CD4-positive, alpha-beta memory T cell (primary cell): ENCODE measurements at regions of chr10 and their contacts with region 1.

Region 1: GRCh38 chr10:62816331-62817120 is at the start of gene EGR2:
- DNase-seq: peak; percentile 97 to 99 (median 98)
- H3K4me3 ChIP-seq: peak within 1 kb of the TSS; percentile 62 to 66
- H3K4me3 Mint-ChIP-seq: peak within 1 kb of the TSS; percentile 90 to 100 (median 98)
- H3K27ac ChIP-seq: peak within 1 kb of the TSS; percentile 69
- H3K27ac Mint-ChIP-seq: peak within 1 kb of the TSS; percentile 91 to 99 (median 97)
- H3K4me1 ChIP-seq: peaks cover 40% of the 10 kb centered on the region
- H3K4me1 Mint-ChIP-seq: peaks cover 25 to 56% (median 38%) of the 10 kb centered on the region in 4 donors
- H3K27me3 ChIP-seq: peaks cover 25% of the 10 kb centered on the region
- H3K27me3 Mint-ChIP-seq: peaks cover 27 to 34% of the 10 kb centered on the region in 2 donors
- total RNA-seq, gene EGR2: 2.0 to 2.2 TPM

Region 2: DNA sequence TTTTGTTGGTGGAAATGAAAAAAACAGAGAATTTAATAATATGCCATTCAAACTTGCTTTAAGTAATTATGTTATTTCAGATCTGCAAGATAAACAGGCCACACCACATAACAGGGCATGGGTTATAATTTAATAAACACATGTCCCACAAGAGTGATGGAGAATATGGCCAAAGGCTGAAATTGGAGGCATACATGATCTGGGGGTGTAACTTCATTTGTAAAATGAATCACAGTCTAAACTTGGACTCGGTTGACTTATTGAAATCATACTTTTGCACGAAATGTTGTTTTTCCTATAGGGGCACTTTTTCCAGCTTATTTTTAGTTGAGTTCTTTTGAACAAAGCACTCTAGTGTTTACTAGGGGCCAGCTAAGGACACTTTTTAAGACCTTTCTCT is 1515.0 kb before region 1 on chr10:
- CTCF ChIA-PET with region 1: no interaction called
- POLR2A ChIA-PET with region 1: no interaction called
- intact Hi-C with region 1: no loop called
- DNase-seq: no peak
- H3K4me3 ChIP-seq: no peak overlapping the region
- H3K4me3 Mint-ChIP-seq: no peak overlapping the region
- H3K27ac ChIP-seq: no peak overlapping the region
- H3K27ac Mint-ChIP-seq: no peak overlapping the region
- H3K4me1 ChIP-seq: no peaks in the 10 kb centered on the region
- H3K4me1 Mint-ChIP-seq: no peaks in the 10 kb centered on the region
- H3K27me3 ChIP-seq: no peaks in the 10 kb centered on the region
- H3K27me3 Mint-ChIP-seq: peaks cover 0 to 1% of the 10 kb centered on the region in 2 donors

Region 3: DNA sequence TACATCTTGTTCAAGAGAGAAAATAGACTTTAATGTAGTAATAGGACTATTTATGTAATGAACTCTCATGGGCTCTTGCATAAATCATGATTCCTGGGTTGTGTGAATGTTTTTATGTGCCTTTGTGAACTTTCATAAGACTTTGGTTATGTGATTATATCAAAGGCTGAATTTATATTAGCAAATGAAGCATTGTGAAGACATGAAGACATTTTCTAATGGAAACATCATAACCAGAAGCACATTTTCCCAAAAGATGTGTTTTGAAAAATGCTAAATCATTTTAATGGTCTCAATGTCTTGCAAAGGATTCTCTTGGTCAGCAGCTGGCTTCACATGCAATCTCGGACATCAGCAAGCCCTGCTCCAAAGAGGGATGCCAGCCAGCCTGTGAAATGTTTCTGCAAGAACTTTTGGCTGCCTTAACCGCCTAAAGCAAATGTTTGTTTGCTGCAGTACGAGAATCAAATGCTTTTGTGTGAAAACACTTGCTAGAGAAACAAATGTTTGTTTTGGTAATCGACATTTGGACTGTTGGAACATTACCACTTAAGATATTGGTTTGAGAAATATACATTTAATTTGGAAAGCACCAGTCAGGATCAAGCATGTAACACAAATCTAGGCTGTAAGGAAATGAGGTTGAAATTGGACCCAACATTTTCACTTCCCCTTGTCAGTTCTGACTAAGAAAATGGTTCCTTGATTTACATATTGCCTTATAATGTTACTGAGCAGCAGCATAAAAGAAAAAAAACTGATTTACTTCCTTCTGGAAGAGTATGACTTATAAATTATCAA is 650.0 kb before region 1 on chr10:
- CTCF ChIA-PET with region 1: no interaction called
- POLR2A ChIA-PET with region 1: no interaction called
- intact Hi-C with region 1: no loop called
- DNase-seq: no peak
- H3K4me3 ChIP-seq: no peak overlapping the region
- H3K4me3 Mint-ChIP-seq: no peak overlapping the region
- H3K27ac ChIP-seq: no peak overlapping the region
- H3K27ac Mint-ChIP-seq: no peak overlapping the region
- H3K4me1 ChIP-seq: no peaks in the 10 kb centered on the region
- H3K4me1 Mint-ChIP-seq: peaks cover 0 to 2% (median 0%) of the 10 kb centered on the region in 4 donors
- H3K27me3 ChIP-seq: no peaks in the 10 kb centered on the region
- H3K27me3 Mint-ChIP-seq: no peaks in the 10 kb centered on the region

Region 4: DNA sequence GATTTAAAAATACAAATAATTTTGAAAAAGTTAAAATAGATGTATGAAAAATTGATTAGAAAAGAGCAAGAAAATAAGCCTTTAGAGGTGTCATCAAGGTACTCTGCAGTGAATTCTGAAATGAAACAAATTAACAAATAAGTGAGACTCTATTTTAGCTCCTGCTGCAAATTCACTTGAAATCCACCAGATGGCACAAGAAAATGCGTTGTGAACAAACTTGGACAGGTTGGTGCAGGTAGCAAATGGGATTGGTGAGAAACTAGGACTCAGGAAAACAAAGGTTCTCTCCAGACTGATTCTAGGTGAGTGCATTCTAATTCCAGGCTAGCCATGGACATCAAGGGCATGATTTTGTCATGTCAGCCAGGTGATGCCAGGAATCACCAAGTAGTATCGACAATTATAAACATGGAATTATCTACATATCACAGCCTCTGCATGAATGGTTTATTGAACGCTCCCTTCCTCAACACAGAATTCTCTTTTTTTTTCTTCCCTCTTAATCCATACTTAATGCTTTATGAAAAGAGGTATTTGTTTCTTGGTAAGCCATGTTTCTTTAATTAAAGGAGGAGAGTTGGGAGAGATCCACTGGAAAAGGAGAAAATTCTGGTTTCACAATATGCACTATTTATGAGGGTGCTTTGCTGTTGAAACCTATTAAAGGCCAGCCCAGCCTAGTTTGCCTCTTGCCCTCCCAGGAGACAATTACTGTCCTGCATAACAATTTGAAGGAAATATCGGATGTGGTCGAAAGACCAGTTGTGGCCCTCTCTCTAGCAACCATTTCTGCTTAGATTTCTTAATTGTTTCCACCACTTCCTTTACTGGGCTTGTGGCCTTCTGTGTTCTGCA is 324.3 kb before region 1 on chr10:
- CTCF ChIA-PET with region 1: interaction called, 3 read pairs
- POLR2A ChIA-PET with region 1: no interaction called
- intact Hi-C with region 1: loop called (anchors 1 kb)
- DNase-seq: peak in 4 of 5 donors; percentile 12 to 35 (median 23)
- H3K4me3 ChIP-seq: no peak overlapping the region
- H3K4me3 Mint-ChIP-seq: no peak overlapping the region
- H3K27ac ChIP-seq: no peak overlapping the region
- H3K27ac Mint-ChIP-seq: no peak overlapping the region
- H3K4me1 ChIP-seq: no peaks in the 10 kb centered on the region
- H3K4me1 Mint-ChIP-seq: peaks cover 0 to 2% (median 0%) of the 10 kb centered on the region in 4 donors
- H3K27me3 ChIP-seq: no peaks in the 10 kb centered on the region
- H3K27me3 Mint-ChIP-seq: peaks cover 1 to 2% of the 10 kb centered on the region in 2 donors

Region 5: GRCh38 chr10:62610649-62611229 is 205.8 kb before region 1 on chr10:
- CTCF ChIA-PET with region 1: interaction called, 148 read pairs
- POLR2A ChIA-PET with region 1: interaction called, 29 read pairs
- intact Hi-C with region 1: loop called (anchors 1 kb)
- DNase-seq: peak; percentile 76 to 80 (median 78)
- H3K4me3 ChIP-seq: no peak overlapping the region
- H3K4me3 Mint-ChIP-seq: no peak overlapping the region
- H3K27ac ChIP-seq: no peak overlapping the region
- H3K27ac Mint-ChIP-seq: peak overlapping the region in 2 of 7 donors; percentile 46 to 78
- H3K4me1 ChIP-seq: peaks cover 4% of the 10 kb centered on the region
- H3K4me1 Mint-ChIP-seq: peaks cover 3 to 9% (median 4%) of the 10 kb centered on the region in 4 donors
- H3K27me3 ChIP-seq: no peaks in the 10 kb centered on the region
- H3K27me3 Mint-ChIP-seq: peaks cover 4 to 8% of the 10 kb centered on the region in 2 donors

Region 6: GRCh38 chr10:62689712-62690111 is 126.8 kb before region 1 on chr10:
- CTCF ChIA-PET with region 1: interaction called, 11 read pairs
- POLR2A ChIA-PET with region 1: interaction called, 12 read pairs
- intact Hi-C with region 1: no loop called
- DNase-seq: peak in 4 of 5 donors; percentile 35 to 54 (median 49)
- H3K4me3 ChIP-seq: peak overlapping the region in 1 of 2 donors; percentile 15
- H3K4me3 Mint-ChIP-seq: peak overlapping the region; percentile 68 to 88 (median 80)
- H3K27ac ChIP-seq: peak overlapping the region; percentile 55
- H3K27ac Mint-ChIP-seq: peak overlapping the region; percentile 75 to 95 (median 90)
- H3K4me1 ChIP-seq: peaks cover 43% of the 10 kb centered on the region
- H3K4me1 Mint-ChIP-seq: peaks cover 35 to 65% (median 52%) of the 10 kb centered on the region in 4 donors
- H3K27me3 ChIP-seq: no peaks in the 10 kb centered on the region
- H3K27me3 Mint-ChIP-seq: no peaks in the 10 kb centered on the region

Region 7: GRCh38 chr10:62804356-62805230 is 11.9 kb before region 1 on chr10 and contains the start of gene ADO:
- CTCF ChIA-PET with region 1: interaction called, 45 read pairs
- POLR2A ChIA-PET with region 1: interaction called, 109 read pairs
- intact Hi-C with region 1: loop called (anchors 1 kb)
- DNase-seq: peak; percentile 80 to 86 (median 83)
- H3K4me3 ChIP-seq: peak within 1 kb of the TSS; percentile 60 to 88
- H3K4me3 Mint-ChIP-seq: peak within 1 kb of the TSS; percentile 91 to 99 (median 96)
- H3K27ac ChIP-seq: peak within 1 kb of the TSS; percentile 83
- H3K27ac Mint-ChIP-seq: peak within 1 kb of the TSS; percentile 96 to 100 (median 99)
- H3K4me1 ChIP-seq: peaks cover 35% of the 10 kb centered on the region
- H3K4me1 Mint-ChIP-seq: peaks cover 22 to 45% (median 33%) of the 10 kb centered on the region in 4 donors
- H3K27me3 ChIP-seq: no peaks in the 10 kb centered on the region
- H3K27me3 Mint-ChIP-seq: no peaks in the 10 kb centered on the region
- total RNA-seq, gene ADO: 18.6 to 19.1 TPM

Region 8: DNA sequence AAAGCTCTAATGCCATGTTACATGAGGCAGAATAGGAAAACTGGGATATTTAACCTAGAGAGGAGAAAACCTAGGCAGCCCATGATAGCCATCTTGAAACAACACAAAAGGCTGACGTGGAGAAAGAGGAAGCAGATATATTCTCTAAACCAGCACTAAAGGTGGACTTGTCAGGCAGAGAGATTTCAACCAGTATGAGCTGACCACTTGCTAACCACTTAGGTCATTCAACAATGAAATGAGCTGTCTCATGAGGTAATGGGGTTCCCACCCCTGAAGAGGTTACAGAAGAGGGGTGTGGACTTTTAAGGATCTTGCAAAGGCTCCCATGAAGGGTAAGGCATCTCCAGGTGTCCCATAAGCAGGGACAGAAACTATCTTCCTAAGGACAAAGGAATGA is 26.5 kb after region 1 on chr10:
- CTCF ChIA-PET with region 1: no interaction called
- POLR2A ChIA-PET with region 1: no interaction called
- intact Hi-C with region 1: no loop called
- DNase-seq: no peak
- H3K4me3 ChIP-seq: no peak overlapping the region
- H3K4me3 Mint-ChIP-seq: no peak overlapping the region
- H3K27ac ChIP-seq: no peak overlapping the region
- H3K27ac Mint-ChIP-seq: no peak overlapping the region
- H3K4me1 ChIP-seq: no peaks in the 10 kb centered on the region
- H3K4me1 Mint-ChIP-seq: peaks cover 0 to 6% (median 0%) of the 10 kb centered on the region in 4 donors
- H3K27me3 ChIP-seq: no peaks in the 10 kb centered on the region
- H3K27me3 Mint-ChIP-seq: peaks cover 2 to 5% of the 10 kb centered on the region in 2 donors

Region 9: GRCh38 chr10:63268798-63269503 is 452.4 kb after region 1 on chr10:
- CTCF ChIA-PET with region 1: no interaction called
- POLR2A ChIA-PET with region 1: interaction called, 4 read pairs
- intact Hi-C with region 1: loop called (anchors 5 kb)
- DNase-seq: peak; percentile 86 to 95 (median 92)
- H3K4me3 ChIP-seq: peak overlapping the region; percentile 59 to 83
- H3K4me3 Mint-ChIP-seq: peak overlapping the region; percentile 96 to 100 (median 98)
- H3K27ac ChIP-seq: peak overlapping the region; percentile 94
- H3K27ac Mint-ChIP-seq: peak overlapping the region; percentile 95 to 100 (median 100)
- H3K4me1 ChIP-seq: peaks cover 35% of the 10 kb centered on the region
- H3K4me1 Mint-ChIP-seq: peaks cover 10 to 25% (median 19%) of the 10 kb centered on the region in 4 donors
- H3K27me3 ChIP-seq: no peaks in the 10 kb centered on the region
- H3K27me3 Mint-ChIP-seq: no peaks in the 10 kb centered on the region